Heart right ventricle (tissue), 16 donors: ENCODE measurements at regions of chr14 and their contacts with region 1.

Region 1: DNA sequence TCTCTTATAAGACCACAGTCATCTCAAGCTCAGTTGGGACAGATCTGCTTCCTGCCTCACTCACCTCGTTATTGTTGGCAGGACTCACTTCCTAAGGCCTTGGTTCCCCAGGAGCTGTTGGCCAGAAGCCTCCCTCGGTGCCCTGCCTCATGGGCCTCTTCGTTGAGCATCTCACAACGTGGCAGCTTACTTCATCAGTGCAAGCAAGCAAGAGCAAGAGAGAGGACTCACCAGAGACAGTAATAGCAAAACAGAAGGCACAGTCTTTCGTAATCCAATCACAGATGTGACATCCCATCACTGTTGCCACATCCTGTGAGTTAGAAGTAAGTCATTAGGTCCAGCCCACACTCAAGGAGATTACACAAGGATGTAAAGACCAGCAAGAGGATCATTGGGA is 5.1 kb upstream of the NUMB start:
- DNase-seq: peak; percentile 22 to 23
- ATAC-seq: peak in 1 of 8 donors; percentile 49
- H3K4me3 ChIP-seq: peak overlapping the region in 1 of 10 donors; percentile 36
- H3K27ac ChIP-seq: peak overlapping the region in 9 of 10 donors; percentile 23 to 89 (median 57)
- H3K4me1 ChIP-seq: peaks cover 5 to 92% (median 53%) of the 10 kb centered on the region in 9 donors
- H3K27me3 ChIP-seq: no peaks in the 10 kb centered on the region
- CTCF ChIP-seq: no peak

Region 2: DNA sequence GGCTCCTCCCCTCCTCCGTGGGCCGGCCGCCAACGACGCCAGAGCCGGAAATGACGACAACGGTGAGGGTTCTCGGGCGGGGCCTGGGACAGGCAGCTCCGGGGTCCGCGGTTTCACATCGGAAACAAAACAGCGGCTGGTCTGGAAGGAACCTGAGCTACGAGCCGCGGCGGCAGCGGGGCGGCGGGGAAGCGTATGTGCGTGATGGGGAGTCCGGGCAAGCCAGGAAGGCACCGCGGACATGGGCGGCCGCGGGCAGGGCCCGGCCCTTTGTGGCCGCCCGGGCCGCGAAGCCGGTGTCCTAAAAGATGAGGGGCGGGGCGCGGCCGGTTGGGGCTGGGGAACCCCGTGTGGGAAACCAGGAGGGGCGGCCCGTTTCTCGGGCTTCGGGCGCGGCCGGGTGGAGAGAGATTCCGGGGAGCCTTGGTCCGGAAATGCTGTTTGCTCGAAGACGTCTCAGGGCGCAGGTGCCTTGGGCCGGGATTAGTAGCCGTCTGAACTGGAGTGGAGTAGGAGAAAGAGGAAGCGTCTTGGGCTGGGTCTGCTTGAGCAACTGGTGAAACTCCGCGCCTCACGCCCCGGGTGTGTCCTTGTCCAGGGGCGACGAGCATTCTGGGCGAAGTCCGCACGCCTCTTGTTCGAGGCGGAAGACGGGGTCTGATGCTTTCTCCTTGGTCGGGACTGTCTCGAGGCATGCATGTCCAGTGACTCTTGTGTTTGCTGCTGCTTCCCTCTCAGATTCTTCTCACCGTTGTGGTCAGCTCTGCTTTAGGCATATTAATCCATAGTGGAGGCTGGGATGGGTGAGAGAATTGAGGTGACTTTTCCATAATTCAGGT is 326.8 kb before region 1 on chr14 and contains the start of gene PSEN1:
- intact Hi-C with region 1: loop called in 1 of 10 experiments (anchors 5 kb)
- DNase-seq: peak; percentile 95 to 96
- ATAC-seq: peak; percentile 98 to 100 (median 98)
- H3K4me3 ChIP-seq: peak within 1 kb of the TSS; percentile 73 to 98 (median 93)
- H3K27ac ChIP-seq: peak within 1 kb of the TSS; percentile 86 to 97 (median 93)
- H3K4me1 ChIP-seq: peaks cover 0 to 36% (median 19%) of the 10 kb centered on the region in 9 donors
- H3K27me3 ChIP-seq: no peaks in the 10 kb centered on the region
- CTCF ChIP-seq: no peak
- total RNA-seq, gene PSEN1: 19.9 to 33.7 (median 24.9) TPM

Region 3: DNA sequence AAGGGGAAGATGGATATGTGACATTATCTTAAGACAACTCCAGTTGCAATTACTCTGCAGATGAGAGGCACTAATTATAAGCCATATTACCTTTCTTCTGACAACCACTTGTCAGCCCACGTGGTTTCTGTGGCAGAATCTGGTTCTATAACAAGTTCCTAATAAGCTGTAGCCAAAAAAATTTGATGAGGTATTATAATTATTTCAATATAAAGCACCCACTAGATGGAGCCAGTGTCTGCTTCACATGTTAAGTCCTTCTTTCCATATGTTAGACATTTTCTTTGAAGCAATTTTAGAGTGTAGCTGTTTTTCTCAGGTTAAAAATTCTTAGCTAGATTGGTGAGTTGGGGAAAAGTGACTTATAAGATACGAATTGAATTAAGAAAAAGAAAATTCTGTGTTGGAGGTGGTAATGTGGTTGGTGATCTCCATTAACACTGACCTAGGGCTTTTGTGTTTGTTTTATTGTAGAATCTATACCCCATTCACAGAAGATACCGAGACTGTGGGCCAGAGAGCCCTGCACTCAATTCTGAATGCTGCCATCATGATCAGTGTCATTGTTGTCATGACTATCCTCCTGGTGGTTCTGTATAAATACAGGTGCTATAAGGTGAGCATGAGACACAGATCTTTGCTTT is 290.2 kb before region 1 on chr14:
- intact Hi-C with region 1: loop called in 1 of 10 experiments (anchors 10 kb)
- DNase-seq: no peak
- ATAC-seq: no peak
- H3K4me3 ChIP-seq: no peak overlapping the region
- H3K27ac ChIP-seq: no peak overlapping the region
- H3K4me1 ChIP-seq: peaks cover 0 to 18% (median 0%) of the 10 kb centered on the region in 9 donors
- H3K27me3 ChIP-seq: no peaks in the 10 kb centered on the region
- CTCF ChIP-seq: peak; percentile 16 to 62 (median 55)

Region 4: GRCh38 chr14:73295198-73295796 is 168.1 kb before region 1 on chr14:
- intact Hi-C with region 1: loop called in 3 of 10 experiments (anchors 2 to 5 kb)
- DNase-seq: peak in 1 of 2 donors; percentile 14
- ATAC-seq: peak in 1 of 8 donors; percentile 22
- H3K4me3 ChIP-seq: no peak overlapping the region
- H3K27ac ChIP-seq: no peak overlapping the region
- H3K4me1 ChIP-seq: no peaks in the 10 kb centered on the region
- H3K27me3 ChIP-seq: no peaks in the 10 kb centered on the region
- CTCF ChIP-seq: peak; percentile 57 to 86 (median 75)

Region 5: GRCh38 chr14:73426877-73427276 is 36.5 kb before region 1 on chr14:
- intact Hi-C with region 1: loop called in 3 of 10 experiments (anchors 1 to 5 kb)
- DNase-seq: peak in 1 of 2 donors; percentile 8
- ATAC-seq: peak; percentile 54 to 72 (median 62)
- H3K4me3 ChIP-seq: no peak overlapping the region
- H3K27ac ChIP-seq: peak overlapping the region in 9 of 10 donors; percentile 5 to 86 (median 65)
- H3K4me1 ChIP-seq: peaks cover 3 to 66% (median 42%) of the 10 kb centered on the region in 9 donors
- H3K27me3 ChIP-seq: no peaks in the 10 kb centered on the region
- CTCF ChIP-seq: no peak